ENCODE measurements at regions of chr22 and their contacts with region 1.

Region 1: GRCh38 chr22:36387752-36388518 is at the start of gene MYH9:
- DNase-seq: peak; percentile 98 to 100
- H3K4me3 ChIP-seq: peak within 1 kb of the TSS; percentile 96
- H3K27ac ChIP-seq: peak within 1 kb of the TSS; percentile 79
- H3K4me1 ChIP-seq: peaks cover 34% of the 10 kb centered on the region
- H3K27me3 ChIP-seq: no peaks in the 10 kb centered on the region
- CTCF ChIP-seq: no peak
- total RNA-seq, gene MYH9: 758 and 776 TPM in 2 replicates

Region 2: GRCh38 chr22:36369922-36370791 is 17.8 kb before region 1 on chr22:
- CTCF ChIA-PET with region 1: no interaction called
- POLR2A ChIA-PET with region 1: interaction called, 12 read pairs
- intact Hi-C with region 1: loop called (anchors 1 kb)
- DNase-seq: peak; percentile 80 to 93
- H3K4me3 ChIP-seq: peak overlapping the region; percentile 43
- H3K27ac ChIP-seq: peak overlapping the region; percentile 78
- H3K4me1 ChIP-seq: peaks cover 100% of the 10 kb centered on the region
- H3K27me3 ChIP-seq: no peaks in the 10 kb centered on the region
- CTCF ChIP-seq: no peak

Region 3: GRCh38 chr22:36409911-36410756 is 22.2 kb after region 1 on chr22:
- CTCF ChIA-PET with region 1: interaction called, 3 read pairs
- POLR2A ChIA-PET with region 1: interaction called, 14 read pairs
- intact Hi-C with region 1: loop called (anchors 1 kb)
- DNase-seq: peak; percentile 99 to 100
- H3K4me3 ChIP-seq: peak overlapping the region; percentile 43
- H3K27ac ChIP-seq: peak overlapping the region; percentile 89
- H3K4me1 ChIP-seq: peaks cover 69% of the 10 kb centered on the region
- H3K27me3 ChIP-seq: no peaks in the 10 kb centered on the region
- CTCF ChIP-seq: 0 out of 2 replicates have a peak, but pooled peaks have one; percentile 30

Region 4: DNA sequence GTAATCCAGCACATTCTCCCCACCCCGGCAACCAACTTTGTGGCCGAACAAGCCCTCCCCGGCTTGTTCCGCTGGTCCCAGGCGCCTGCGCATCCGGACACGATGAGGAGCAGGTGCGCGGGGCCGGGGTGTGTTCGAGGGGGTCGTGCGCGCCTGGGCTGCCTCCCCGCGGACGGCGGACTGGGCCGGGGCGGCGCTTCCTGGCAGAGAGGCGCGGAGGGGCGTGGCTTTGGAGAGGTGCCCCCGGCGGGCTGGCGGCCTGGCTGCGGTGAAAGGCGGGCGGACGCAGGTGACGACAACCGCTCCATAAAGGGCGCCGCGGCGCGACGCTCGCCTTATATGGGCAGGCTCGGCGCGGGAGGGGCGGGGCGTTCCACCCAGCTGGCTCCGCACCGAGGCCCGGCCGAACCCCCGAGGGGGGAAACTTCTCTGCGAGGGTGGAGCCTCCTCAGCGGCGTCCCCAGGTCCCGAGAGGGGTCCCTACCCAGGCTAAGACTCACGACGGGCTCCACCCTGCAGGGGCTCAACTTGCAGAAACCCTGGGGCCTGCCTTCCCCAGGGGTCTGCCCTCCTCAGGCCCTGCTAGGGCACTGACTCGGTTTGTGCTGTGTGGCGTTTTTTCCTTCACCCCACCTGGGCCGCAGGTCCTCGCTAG is 67.1 kb after region 1 on chr22:
- CTCF ChIA-PET with region 1: no interaction called
- POLR2A ChIA-PET with region 1: interaction called, 4 read pairs
- intact Hi-C with region 1: loop called (anchors 2 kb)
- DNase-seq: peak; percentile 81 to 96
- H3K4me3 ChIP-seq: peak overlapping the region; percentile 61
- H3K27ac ChIP-seq: peak overlapping the region; percentile 7; the same call in 1 of the 2 replicates
- H3K4me1 ChIP-seq: peaks cover 62% of the 10 kb centered on the region
- H3K27me3 ChIP-seq: no peaks in the 10 kb centered on the region
- CTCF ChIP-seq: 0 out of 2 replicates have a peak, but pooled peaks have one; percentile 15